Activated CD4-positive, alpha-beta T cell treated with anti-CD3 and anti-CD28 coated beads for 36 hours (primary cell): ENCODE measurements at regions of chr9 and their contacts with region 1.

Region 1: DNA sequence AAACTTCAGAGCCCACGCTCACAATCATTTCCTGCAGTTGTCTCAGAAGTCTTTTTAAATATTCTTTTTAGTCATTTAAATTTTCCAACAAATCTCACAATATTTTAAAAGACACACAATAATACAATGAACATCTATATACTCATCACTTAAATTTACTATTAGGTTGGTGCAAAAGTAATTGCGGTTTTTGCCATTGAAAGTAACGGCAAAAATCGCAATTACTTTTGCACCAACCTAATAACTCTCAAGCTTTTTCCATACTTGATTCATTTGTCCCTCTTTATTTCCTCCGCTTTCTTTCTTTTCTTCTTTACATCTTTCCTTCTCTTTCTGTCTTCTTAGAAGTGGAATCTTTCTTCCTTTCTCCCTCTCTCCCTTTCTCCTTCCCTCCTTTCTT is 19.2 kb upstream of the TMEM215 start:
- DNase-seq: no peak
- ATAC-seq: no peak
- H3K4me3 Mint-ChIP-seq: no peak overlapping the region
- H3K27ac Mint-ChIP-seq: no peak overlapping the region
- H3K4me1 Mint-ChIP-seq: no peaks in the 10 kb centered on the region
- H3K27me3 Mint-ChIP-seq: peaks cover 9% of the 10 kb centered on the region

Region 2: GRCh38 chr9:32723789-32724325 is 40.3 kb before region 1 on chr9:
- CTCF ChIA-PET with region 1: no interaction called
- POLR2A ChIA-PET with region 1: no interaction called
- intact Hi-C with region 1: loop called in 1 of 2 experiments (anchors 2 kb)
- DNase-seq: no peak
- ATAC-seq: no peak
- H3K4me3 Mint-ChIP-seq: no peak overlapping the region
- H3K27ac Mint-ChIP-seq: no peak overlapping the region
- H3K4me1 Mint-ChIP-seq: no peaks in the 10 kb centered on the region
- H3K27me3 Mint-ChIP-seq: peaks cover 2% of the 10 kb centered on the region

Region 3: DNA sequence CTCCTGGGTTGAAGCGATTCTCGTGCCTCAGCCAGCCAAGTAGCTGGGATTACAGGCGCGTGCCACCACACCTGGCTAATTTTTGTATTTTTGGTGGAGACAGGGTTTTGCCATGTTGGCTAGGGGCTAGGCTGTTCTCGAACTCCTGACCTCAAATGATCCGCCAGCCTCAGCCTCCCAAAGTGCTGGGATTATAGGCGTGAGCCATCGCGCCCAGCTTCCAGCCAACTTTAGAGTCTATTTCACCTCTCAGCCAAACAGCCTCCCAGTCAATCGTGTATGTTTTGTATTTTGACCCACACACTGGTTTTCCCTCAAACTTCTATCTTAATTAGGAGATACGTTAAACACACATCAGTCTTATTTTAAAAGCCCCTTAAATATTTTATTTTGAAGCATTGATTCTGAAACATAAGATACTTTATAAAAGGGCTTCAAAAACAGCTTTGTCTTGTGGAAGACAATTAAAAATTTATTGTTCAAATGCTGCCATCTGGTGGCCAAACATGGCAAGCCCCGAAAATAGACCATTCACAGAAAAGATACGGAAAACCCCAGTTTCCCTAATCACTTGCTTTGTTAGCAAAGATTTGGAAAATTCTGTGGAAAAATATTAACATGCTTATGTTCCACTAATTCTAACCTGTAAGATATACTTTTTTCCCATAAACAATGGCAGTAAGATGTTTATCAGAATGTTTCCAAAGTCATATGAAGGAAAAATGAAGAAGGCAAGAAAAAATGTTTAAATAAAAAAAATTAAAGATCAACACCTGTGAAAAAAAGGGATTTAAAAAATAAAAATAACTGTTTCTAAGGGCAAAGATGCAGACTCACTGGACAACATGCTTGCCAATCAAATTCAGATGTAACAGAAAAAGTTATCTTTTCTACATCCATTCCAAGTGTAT is 204.2 kb after region 1 on chr9:
- CTCF ChIA-PET with region 1: no interaction called
- POLR2A ChIA-PET with region 1: no interaction called
- intact Hi-C with region 1: loop called in 1 of 2 experiments (anchors 10 kb)
- DNase-seq: peak; percentile 74
- ATAC-seq: no peak
- H3K4me3 Mint-ChIP-seq: no peak overlapping the region
- H3K27ac Mint-ChIP-seq: no peak overlapping the region
- H3K4me1 Mint-ChIP-seq: no peaks in the 10 kb centered on the region
- H3K27me3 Mint-ChIP-seq: no peaks in the 10 kb centered on the region